AG04450 (cell line): ENCODE measurements at regions of chr3 and their contacts with region 1.

Region 1: DNA sequence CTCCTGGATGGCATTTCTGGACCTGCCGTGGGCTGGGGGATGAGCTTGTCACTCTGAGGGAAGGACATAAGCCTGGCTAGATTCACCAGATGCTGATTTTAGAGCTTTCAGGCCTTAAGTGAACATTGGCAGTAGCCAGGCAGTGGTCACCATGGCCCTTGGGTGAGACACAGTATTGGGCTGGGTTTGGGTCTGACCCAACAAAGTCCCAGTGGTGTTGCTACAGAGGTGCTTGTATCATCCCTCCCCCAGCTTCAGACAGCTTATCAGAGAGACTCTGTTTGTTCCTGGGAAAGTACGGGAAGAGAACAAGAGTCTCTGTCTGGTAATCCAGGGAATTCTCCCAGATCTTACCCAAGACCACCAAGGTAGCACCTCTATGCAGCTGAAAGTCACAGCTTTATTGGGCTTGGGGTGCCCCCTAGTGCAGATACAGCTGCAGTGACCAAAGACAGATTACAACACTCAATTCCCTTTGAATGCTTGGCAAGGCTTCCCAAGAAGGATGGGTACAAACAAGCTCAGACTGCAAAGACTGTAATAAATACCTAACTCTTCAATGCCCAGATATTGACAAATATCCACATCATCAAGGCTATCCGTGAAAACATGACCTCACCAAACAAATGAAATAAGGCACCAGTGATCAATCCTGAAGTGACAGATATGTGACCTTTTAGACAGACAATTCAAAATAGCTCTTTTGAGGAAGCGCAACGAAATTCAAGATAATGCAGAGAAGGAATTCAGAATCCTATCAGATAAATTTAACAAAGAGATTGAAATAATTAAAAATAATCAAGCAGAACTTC is 9.9 kb upstream of the RUVBL1 start:
- DNase-seq: peak; percentile 23
- H3K4me3 ChIP-seq: no peak overlapping the region
- H3K27ac ChIP-seq: no peak overlapping the region
- H3K27me3 ChIP-seq: peaks cover 15% of the 10 kb centered on the region
- CTCF ChIP-seq: peak; percentile 77

Region 2: GRCh38 chr3:128068211-128068620 is 65.3 kb before region 1 on chr3:
- CTCF ChIA-PET with region 1: interaction called, 15 read pairs
- POLR2A ChIA-PET with region 1: no interaction called
- DNase-seq: no peak
- H3K4me3 ChIP-seq: no peak overlapping the region
- H3K27ac ChIP-seq: no peak overlapping the region
- H3K27me3 ChIP-seq: no peaks in the 10 kb centered on the region
- CTCF ChIP-seq: peak; percentile 68

Region 3: DNA sequence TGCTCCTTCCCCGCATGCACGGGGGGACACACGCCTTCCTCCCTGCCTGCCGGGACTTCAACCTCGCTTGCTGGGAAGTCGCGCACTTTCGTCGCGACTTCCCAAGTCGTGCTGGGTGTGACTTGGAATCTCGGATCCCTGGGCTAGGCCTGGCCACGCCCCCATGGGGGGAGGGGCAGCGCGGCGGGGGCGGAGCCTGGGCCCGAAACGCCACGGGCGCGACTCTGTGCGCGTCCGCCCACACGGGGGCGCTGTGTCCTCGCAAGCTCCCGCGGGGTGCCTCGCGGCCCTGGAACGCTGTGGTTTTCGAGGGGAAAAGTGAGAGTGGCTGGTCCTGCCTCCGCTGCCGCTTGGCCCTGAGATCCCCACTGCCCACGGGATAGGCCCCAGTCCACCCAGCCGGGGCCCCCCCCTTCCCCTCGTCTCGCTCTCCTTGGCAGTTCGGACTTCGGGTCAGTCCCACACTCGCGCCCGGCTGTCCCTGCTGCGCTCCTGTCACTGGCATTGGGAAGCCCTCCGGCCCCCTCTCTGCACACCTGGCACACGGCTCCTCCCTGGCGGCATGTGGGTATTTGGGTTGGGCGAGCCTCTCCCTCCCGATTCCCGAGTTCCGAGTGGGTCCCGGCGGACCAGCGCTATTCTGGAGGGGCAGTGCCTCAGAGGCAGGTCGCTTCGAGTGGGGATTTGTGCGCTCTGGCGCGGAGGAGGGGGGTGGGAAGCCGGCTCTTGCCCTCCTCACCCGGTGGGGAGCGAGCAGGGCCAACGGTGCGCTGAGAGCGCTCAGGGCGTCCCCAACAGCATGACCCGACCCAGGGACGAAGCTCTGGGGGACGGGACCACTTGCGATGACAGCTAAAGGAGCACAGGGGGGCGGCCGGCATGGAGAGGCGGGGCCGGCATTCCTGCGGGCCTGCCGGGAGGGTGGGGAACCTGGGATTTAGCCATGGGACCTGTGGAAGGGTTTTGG is 57.7 kb before region 1 on chr3:
- CTCF ChIA-PET with region 1: interaction called, 15 read pairs
- POLR2A ChIA-PET with region 1: interaction called, 3 read pairs
- DNase-seq: peak; percentile 66
- H3K4me3 ChIP-seq: peak overlapping the region; percentile 37
- H3K27ac ChIP-seq: peak overlapping the region; percentile 52
- H3K27me3 ChIP-seq: no peaks in the 10 kb centered on the region
- CTCF ChIP-seq: peak; percentile 84

Region 4: DNA sequence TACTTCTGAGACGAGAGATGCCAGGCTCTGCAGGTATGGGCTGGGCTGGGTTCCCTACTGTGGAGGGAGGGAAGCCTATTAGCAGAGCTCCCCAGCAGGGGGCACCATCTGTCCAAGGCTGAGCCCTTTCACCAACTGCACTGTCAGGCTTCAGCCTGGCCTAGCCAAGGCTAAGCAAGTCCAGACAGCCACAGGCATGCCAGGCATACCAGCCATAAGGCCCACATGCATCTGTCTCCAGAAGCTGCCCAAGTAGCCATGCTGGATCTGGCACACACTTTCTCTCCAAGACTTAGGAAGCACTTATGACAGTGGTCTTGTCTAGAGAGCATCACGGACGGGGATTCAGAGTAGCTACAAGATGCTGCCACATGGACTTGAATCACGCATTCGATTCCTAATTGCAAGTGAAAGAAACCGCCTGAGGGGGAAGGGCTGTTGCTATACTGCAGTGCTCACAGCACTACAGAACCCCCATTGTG is 38.2 kb before region 1 on chr3:
- CTCF ChIA-PET with region 1: interaction called, 81 read pairs
- POLR2A ChIA-PET with region 1: interaction called, 3 read pairs
- DNase-seq: peak; percentile 65
- H3K4me3 ChIP-seq: no peak overlapping the region
- H3K27ac ChIP-seq: peak overlapping the region; percentile 57
- H3K27me3 ChIP-seq: no peaks in the 10 kb centered on the region
- CTCF ChIP-seq: peak; percentile 89

Region 5: DNA sequence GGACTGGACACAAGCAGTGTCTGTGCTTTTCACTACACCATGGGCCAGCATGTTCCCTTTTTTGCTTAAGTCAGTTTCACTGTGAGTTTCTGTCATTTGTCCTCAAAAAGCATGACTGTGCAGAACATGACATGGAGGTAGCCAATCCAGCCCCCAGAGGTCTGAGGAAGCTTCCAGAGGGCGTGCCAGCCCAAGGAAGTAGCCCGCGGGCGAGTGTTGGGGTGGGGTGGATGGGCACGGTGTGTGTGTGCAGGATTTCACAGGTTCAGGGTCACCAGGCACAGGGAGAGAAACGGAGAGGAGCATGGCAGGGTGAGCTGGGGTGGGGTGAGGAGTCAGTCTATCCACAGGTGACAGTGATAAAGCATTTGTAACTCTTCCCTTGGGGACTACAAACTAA is 11.9 kb after region 1 on chr3:
- CTCF ChIA-PET with region 1: interaction called, 16 read pairs
- POLR2A ChIA-PET with region 1: no interaction called
- DNase-seq: no peak
- H3K4me3 ChIP-seq: no peak overlapping the region
- H3K27ac ChIP-seq: no peak overlapping the region
- H3K27me3 ChIP-seq: peaks cover 6% of the 10 kb centered on the region
- CTCF ChIP-seq: no peak